HCT116 (cell line): ENCODE measurements at regions of chr4 and their contacts with region 1.

Region 1: GRCh38 chr4:141346144-141346543 is 125.4 kb downstream of the ZNF330 start:
- DNase-seq: peak; percentile 24
- ATAC-seq: peak; percentile 87
- H3K4me3 ChIP-seq: no peak overlapping the region
- H3K27ac ChIP-seq: no peak overlapping the region
- H3K4me1 ChIP-seq: peaks cover 0 to 4% of the 10 kb centered on the region in 2 experiments; a peak in 1 of 4 replicates
- H3K27me3 ChIP-seq: no peaks in the 10 kb centered on the region
- CTCF ChIP-seq: peak; percentile 24 to 63 (median 53); a peak in 3 of 6 replicates
- POLR2A ChIP-seq: no peak
- RAD21 ChIP-seq: peak; percentile 80

Region 2: DNA sequence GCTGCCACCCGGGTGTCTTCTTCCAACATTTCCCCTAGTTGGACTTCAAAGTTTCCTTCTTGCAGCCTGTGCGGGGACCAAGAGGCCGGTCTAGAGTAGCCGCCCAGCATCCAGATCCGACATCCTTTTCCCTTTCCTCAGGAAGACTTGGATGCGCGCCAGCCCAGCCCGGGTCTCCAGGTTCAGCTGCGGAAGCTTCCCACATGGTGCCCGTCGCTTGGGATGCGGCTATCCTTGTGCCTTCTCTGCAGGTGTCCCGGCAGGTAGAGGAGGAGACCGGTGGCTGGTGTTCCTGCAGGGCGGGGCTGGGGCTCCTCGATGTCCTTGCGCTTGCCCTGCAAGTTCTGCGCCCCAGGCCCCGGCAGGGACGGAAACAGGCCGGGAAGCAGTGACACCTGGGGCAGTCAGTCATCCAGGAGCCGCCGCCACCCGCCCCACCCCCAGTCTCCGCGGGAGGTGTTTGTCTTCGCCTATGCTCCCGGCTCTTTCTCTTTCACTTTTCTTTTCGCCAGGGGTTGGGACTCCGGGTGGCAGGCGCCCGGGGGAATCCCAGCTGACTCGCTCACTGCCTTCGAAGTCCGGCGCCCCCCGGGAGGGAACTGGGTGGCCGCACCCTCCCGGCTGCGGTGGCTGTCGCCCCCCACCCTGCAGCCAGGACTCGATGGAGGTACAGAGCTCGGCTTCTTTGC is 290.1 kb after region 1 on chr4 and contains the start of gene IL15:
- CTCF ChIA-PET with region 1: interaction called, 5 read pairs
- POLR2A ChIA-PET with region 1: no interaction called
- RAD21 ChIA-PET with region 1: no interaction called
- intact Hi-C with region 1: loop called (anchors 10 kb)
- DNase-seq: peak; percentile 36
- ATAC-seq: peak; percentile 80
- H3K4me3 ChIP-seq: peak within 1 kb of the TSS; percentile 66 to 84
- H3K27ac ChIP-seq: peak within 1 kb of the TSS; percentile 60
- H3K4me1 ChIP-seq: peaks cover 5 to 14% of the 10 kb centered on the region in 2 experiments; a peak in 3 of 4 replicates
- H3K27me3 ChIP-seq: no peaks in the 10 kb centered on the region
- CTCF ChIP-seq: no peak
- POLR2A ChIP-seq: no peak
- RAD21 ChIP-seq: no peak
- total RNA-seq, gene IL15: 1.2 TPM

Region 3: DNA sequence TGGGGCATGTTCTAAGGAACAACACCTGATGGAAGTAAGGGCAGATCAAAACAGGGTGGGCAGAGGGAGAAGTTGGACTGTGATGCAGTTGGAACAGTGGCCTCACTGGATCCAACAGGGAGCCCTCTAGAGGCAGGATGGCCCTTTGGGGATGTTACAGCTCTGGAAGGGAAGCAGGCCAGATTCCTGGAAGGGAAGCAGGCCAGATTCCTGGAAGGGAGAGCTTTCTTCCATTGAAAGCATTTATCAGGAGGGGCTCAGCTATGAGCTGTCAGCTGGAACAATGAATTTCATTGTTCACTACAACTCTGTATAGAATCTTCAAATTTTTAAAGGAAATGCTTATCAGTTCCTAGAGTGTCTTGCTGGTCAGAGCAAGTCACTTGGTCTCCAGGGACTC is 308.0 kb after region 1 on chr4:
- CTCF ChIA-PET with region 1: interaction called, 13 read pairs
- POLR2A ChIA-PET with region 1: no interaction called
- RAD21 ChIA-PET with region 1: no interaction called
- intact Hi-C with region 1: loop called (anchors 1 kb)
- DNase-seq: no peak
- ATAC-seq: peak; percentile 93
- H3K4me3 ChIP-seq: no peak overlapping the region
- H3K27ac ChIP-seq: no peak overlapping the region
- H3K4me1 ChIP-seq: no peaks in the 10 kb centered on the region
- H3K27me3 ChIP-seq: no peaks in the 10 kb centered on the region
- CTCF ChIP-seq: peak; percentile 2 to 82 (median 68); a peak in 4 of 6 replicates
- POLR2A ChIP-seq: no peak
- RAD21 ChIP-seq: peak; percentile 43

Region 4: DNA sequence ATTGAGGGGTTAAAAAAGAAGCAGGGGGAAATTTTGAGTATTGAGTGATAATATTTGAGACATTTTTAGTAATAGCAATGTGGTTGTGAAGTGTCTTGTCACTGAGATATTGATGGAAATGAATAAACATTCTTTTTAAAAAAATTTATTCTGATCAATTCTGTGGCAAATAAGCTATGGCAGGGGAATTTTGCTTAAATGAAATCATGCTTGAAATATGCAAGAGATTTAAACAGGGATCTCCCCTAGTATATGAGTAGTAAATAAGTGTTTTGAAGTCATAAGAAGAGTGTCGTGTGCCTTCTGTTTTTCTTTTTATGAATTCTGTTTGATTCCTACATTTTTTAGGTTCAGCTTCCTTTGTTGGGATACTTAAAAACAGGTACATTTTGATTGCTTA is 313.4 kb after region 1 on chr4:
- CTCF ChIA-PET with region 1: interaction called, 13 read pairs
- POLR2A ChIA-PET with region 1: no interaction called
- RAD21 ChIA-PET with region 1: no interaction called
- intact Hi-C with region 1: loop called (anchors 1 kb)
- DNase-seq: no peak
- ATAC-seq: no peak
- H3K4me3 ChIP-seq: no peak overlapping the region
- H3K27ac ChIP-seq: no peak overlapping the region
- H3K4me1 ChIP-seq: no peaks in the 10 kb centered on the region
- H3K27me3 ChIP-seq: no peaks in the 10 kb centered on the region
- CTCF ChIP-seq: no peak
- POLR2A ChIP-seq: no peak
- RAD21 ChIP-seq: no peak

Region 5: DNA sequence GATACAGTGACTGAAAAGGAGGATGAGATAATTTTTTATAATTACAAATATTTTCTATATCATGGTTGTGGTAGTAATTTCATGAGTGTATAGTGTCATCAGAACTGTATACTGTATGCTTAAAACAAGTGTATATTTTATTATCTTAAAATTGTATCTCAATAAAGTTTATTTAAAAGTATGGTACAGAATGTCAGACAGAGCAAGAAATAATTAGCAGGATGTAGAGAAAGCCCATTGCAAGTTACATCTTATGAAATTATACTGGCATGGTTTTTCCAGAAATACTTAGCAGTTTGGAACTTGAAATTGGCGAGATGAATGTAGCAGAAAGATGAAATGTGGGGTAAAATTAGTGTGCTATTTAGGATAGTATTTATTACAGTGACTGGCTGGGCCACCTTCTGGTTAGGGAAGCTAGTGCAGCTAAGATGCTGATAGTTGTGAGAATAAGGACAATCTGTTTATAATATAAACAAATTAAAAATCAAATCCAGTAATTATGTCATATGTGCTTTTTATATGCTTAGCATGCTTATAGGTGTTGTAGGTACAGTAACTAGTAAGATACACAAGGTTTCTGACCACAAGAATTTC is 365.0 kb after region 1 on chr4:
- CTCF ChIA-PET with region 1: interaction called, 16 read pairs
- POLR2A ChIA-PET with region 1: no interaction called
- RAD21 ChIA-PET with region 1: interaction called, 3 read pairs
- intact Hi-C with region 1: loop called (anchors 2 kb)
- DNase-seq: no peak
- ATAC-seq: 0 out of 2 replicates have a peak, but pooled peaks have one; percentile 43
- H3K4me3 ChIP-seq: no peak overlapping the region
- H3K27ac ChIP-seq: no peak overlapping the region
- H3K4me1 ChIP-seq: peaks cover 19 to 21% of the 10 kb centered on the region in 2 experiments
- H3K27me3 ChIP-seq: no peaks in the 10 kb centered on the region
- CTCF ChIP-seq: peak; percentile 39 to 64 (median 64); a peak in 5 of 6 replicates
- POLR2A ChIP-seq: no peak
- RAD21 ChIP-seq: peak; percentile 58